ENCODE measurements at regions of chr1 and their contacts with region 1.

Region 1: GRCh38 chr1:198756470-198756869 is 117.6 kb downstream of the PTPRC start:
- DNase-seq: no peak
- ATAC-seq: peak; percentile 50; the same call in 1 of the 2 replicates
- H3K4me3 ChIP-seq: no peak overlapping the region
- H3K27ac ChIP-seq: no peak overlapping the region
- H3K4me1 ChIP-seq: no peaks in the 10 kb centered on the region
- H3K27me3 ChIP-seq: no peaks in the 10 kb centered on the region
- CTCF ChIP-seq: peak in 1 of 3 experiments; percentile 7; a peak in 1 of 6 replicates
- POLR2A ChIP-seq: no peak
- RAD21 ChIP-seq: peak; percentile 50

Region 2: DNA sequence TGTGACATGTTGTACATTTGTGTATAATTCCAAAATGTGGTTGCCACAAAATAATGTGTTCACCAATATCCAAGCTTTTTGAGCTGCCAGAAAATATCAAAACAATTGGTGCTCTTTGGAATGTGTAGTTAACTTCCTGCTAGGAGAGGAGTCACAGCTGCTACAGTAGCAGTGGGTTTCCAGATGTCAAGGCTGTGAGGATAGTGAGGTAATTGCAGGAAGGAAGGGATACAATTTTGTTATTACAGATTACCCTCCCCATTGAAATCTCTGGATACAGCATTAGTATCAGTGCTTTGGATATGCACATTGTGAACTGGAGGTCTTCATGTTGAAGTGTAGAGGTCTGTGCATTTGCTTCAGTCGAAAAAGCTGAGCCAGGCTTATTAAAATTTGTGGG is 135.6 kb after region 1 on chr1:
- CTCF ChIA-PET with region 1: no interaction called
- POLR2A ChIA-PET with region 1: no interaction called
- RAD21 ChIA-PET with region 1: no interaction called
- intact Hi-C with region 1: no loop called
- DNase-seq: no peak
- ATAC-seq: no peak
- H3K4me3 ChIP-seq: no peak overlapping the region
- H3K27ac ChIP-seq: no peak overlapping the region
- H3K4me1 ChIP-seq: no peaks in the 10 kb centered on the region
- H3K27me3 ChIP-seq: no peaks in the 10 kb centered on the region
- CTCF ChIP-seq: no peak
- POLR2A ChIP-seq: no peak
- RAD21 ChIP-seq: no peak

Region 3: DNA sequence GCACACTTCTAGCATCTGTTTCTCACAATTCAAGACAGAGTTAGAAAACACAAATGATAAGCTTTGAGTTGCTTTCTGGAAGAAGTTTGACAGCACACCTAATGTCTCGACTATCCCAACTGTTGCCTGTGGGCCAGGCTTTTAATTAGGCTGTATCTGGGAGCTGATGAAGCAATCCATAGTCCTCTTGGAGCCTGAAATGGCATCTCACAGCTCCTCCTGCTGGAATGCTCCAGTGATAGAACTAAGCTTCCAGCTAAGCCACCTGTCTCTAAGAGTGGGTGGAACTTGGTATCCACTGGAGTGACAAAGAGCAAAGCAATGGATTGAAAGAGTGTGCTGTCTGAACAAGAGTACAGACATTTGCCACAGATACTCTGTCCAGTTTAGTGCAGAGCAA is 665.7 kb after region 1 on chr1:
- CTCF ChIA-PET with region 1: interaction called, 13 read pairs
- POLR2A ChIA-PET with region 1: no interaction called
- RAD21 ChIA-PET with region 1: no interaction called
- intact Hi-C with region 1: no loop called
- DNase-seq: peak; percentile 40
- ATAC-seq: peak; percentile 94
- H3K4me3 ChIP-seq: no peak overlapping the region
- H3K27ac ChIP-seq: no peak overlapping the region
- H3K4me1 ChIP-seq: no peaks in the 10 kb centered on the region
- H3K27me3 ChIP-seq: no peaks in the 10 kb centered on the region
- CTCF ChIP-seq: peak; percentile 37 to 63 (median 54); a peak in 5 of 6 replicates
- POLR2A ChIP-seq: no peak
- RAD21 ChIP-seq: peak; percentile 71

Region 4: DNA sequence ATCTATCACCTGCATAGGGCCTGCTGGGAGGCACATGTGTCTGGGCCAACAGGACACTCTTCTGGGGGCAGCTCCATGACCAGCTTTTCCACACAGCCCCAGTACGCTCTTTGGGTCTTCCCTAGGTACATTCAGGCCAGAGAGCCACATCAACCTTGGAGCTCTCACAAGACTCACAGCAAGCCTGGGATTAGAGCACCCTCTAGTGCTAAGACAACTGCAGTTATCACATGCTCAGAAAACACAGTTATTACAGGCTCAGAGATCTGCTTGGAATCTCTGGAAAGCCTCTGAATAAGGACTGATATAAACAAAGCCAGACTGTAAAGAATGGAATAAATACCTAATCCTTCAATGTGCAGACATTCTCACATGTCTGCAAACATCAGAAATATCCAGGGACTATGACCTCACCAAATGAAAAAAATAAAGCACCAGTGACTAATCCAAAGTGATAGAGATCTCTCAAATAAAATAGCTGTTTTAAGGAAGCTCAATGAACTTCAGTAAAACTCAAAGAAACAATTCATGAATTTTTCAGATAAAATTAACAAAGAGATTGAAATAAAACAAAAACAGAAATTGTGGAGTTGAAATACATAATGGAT is 707.2 kb after region 1 on chr1:
- CTCF ChIA-PET with region 1: interaction called, 8 read pairs
- POLR2A ChIA-PET with region 1: no interaction called
- RAD21 ChIA-PET with region 1: interaction called, 5 read pairs
- intact Hi-C with region 1: loop called (anchors 5 kb)
- DNase-seq: peak; percentile 40
- ATAC-seq: peak; percentile 96
- H3K4me3 ChIP-seq: no peak overlapping the region
- H3K27ac ChIP-seq: no peak overlapping the region
- H3K4me1 ChIP-seq: no peaks in the 10 kb centered on the region
- H3K27me3 ChIP-seq: no peaks in the 10 kb centered on the region
- CTCF ChIP-seq: peak; percentile 41 to 72 (median 64); a peak in 5 of 6 replicates
- POLR2A ChIP-seq: no peak
- RAD21 ChIP-seq: peak; percentile 81

Region 5: DNA sequence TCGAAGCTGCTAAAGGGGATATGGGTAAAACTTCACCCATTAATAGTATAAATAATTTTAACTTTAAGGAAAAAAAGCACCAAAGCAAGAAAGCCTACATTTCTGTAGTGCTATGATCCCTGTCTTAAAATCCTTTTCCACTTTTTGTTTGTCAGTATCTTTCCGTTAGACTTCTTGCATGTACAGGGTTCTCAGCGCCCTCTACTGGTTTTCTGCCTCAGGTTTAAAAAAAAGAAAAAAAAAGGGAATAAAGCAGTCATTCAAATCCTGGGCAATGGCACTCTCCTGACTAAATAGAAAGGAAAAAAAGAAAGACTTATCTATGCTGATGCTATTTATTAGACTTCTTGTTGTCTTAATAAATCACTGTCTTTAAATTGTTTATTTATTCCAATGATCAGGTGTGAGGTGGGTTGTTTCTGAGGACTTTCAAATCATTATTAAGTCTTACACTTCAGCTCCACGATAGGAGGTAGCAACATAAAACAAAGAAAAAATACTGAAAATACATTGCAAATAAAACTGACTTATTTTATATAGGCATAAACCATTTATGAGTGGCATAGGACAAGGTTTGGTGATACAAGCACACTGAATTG is 795.6 kb after region 1 on chr1:
- CTCF ChIA-PET with region 1: no interaction called
- POLR2A ChIA-PET with region 1: no interaction called
- RAD21 ChIA-PET with region 1: no interaction called
- intact Hi-C with region 1: loop called (anchors 5 kb)
- DNase-seq: peak; percentile 40
- ATAC-seq: peak; percentile 67
- H3K4me3 ChIP-seq: no peak overlapping the region
- H3K27ac ChIP-seq: no peak overlapping the region
- H3K4me1 ChIP-seq: no peaks in the 10 kb centered on the region
- H3K27me3 ChIP-seq: no peaks in the 10 kb centered on the region
- CTCF ChIP-seq: peak; percentile 66 to 87 (median 75); a peak in 5 of 6 replicates
- POLR2A ChIP-seq: no peak
- RAD21 ChIP-seq: peak; percentile 79

Measured in HCT116 (cell line).